AG04449 (cell line): ENCODE measurements at regions of chr10 and their contacts with region 1.

Region 1: DNA sequence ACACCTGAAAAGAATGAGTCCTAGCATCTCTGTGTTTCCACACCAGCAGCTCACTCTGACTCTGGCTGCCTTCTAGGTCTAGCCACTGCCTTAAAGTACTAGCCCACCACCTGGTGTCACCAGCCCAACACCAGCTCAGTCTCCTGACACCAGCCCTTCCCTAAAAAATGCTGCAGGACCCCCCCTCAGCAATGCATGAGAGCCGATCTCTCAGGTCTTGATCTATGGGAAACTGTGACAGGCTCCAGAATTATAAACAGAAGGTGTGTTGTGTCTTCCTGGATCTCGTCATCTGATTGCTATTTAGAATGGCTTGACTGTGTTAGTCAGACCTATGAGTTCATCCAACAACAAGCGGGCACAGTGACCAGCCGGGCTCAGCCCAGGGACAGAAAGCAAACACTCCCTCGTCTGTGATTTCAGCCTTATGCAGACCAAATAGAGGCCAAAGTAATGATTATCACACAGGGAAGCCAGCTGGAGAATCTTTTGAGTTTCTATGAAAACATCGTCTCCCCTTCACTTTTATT is 66.6 kb downstream of the CUBN start:
- DNase-seq: peak; percentile 33
- H3K4me3 ChIP-seq: no peak overlapping the region; the same call in 1 of the 2 replicates
- CTCF ChIP-seq: no peak

Region 2: DNA sequence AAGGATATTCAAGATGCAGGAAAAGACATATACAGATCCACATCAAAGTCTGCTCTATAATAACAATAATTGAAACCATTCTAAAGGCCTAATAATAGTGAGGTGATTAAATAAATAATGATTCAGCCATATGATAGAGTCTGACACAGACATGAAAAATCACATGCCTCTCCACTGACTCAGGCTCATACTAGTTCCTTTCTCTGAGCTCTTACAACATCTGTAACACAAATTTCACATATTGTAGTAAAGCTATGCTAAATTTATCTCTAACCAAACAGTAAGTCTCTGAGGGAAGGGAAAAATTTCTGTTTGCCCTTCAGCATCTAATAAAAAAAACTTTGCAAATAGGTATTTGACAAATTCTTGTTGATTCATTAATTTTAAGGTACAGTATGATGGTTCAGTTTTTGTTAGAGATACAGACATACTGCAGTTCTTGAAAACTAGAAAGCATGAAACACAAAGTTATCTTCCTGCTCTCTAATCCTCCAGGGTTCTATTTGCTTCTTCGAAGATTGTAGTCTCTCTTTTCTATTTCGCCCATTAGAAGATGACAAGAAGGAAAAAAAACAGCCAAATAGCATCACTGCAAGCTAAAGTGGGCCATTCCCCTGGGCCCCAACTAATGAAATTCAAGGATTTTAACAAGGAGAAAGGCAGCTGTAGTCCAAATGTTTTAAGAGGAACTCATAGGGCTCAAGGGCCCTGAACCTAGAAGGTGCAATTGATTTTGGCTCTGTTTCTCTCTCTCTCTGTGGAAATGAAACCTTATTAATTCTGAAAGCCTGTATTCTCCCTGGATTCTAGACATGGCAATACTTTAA is 12.7 kb after region 1 on chr10:
- CTCF ChIA-PET with region 1: interaction called, 3 read pairs
- POLR2A ChIA-PET with region 1: interaction called, 11 read pairs
- DNase-seq: peak; percentile 83
- H3K4me3 ChIP-seq: no peak overlapping the region
- CTCF ChIP-seq: no peak